AG04449 (cell line): ENCODE measurements at regions of chr6 and their contacts with region 1.

Region 1: GRCh38 chr6:170529839-170530469 is 23.2 kb downstream of the PSMB1 start:
- DNase-seq: no peak
- H3K4me3 ChIP-seq: no peak overlapping the region
- CTCF ChIP-seq: peak; percentile 87

Region 2: DNA sequence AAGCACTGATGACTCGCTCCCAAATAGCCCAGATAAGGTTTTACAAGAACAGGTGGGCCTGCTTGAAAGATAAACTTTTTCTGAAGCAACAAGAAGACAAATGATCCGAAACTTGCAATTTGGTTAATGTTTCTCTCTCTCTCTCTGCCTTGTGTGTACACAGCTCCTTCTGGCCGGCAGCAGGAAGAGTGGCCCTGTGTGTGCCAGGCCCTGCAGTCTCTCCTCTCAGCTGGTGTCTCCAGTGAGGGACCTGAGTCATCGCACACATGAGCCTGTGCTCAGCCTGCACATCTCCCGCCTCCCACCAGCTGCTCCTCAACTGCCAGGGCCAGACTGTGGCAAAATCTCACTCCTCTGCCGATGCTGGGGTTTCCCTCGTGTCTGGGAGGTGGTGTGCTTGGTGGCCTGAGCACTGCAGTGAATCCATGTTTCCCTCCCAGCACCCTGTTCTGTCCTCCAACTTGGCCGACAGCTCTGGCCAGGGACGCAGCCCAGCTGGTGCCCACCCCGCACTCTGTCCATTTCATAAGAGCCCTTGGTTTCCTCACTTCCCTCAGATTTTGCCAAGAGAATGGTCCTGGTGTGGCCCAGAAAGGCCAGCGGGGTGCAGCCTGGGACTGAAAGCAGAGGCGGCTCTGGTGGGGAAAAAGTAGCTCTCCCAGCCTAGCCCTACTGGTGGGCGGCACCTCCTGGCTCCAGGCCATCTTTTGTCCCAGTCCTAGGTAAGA is 729.1 kb before region 1 on chr6:
- CTCF ChIA-PET with region 1: interaction called, 11 read pairs
- POLR2A ChIA-PET with region 1: no interaction called
- DNase-seq: no peak
- H3K4me3 ChIP-seq: no peak overlapping the region
- CTCF ChIP-seq: no peak

Region 3: GRCh38 chr6:170516783-170517616 is 13.0 kb before region 1 on chr6:
- CTCF ChIA-PET with region 1: interaction called, 47 read pairs
- POLR2A ChIA-PET with region 1: no interaction called
- DNase-seq: peak; percentile 31
- H3K4me3 ChIP-seq: no peak overlapping the region
- CTCF ChIP-seq: peak; percentile 73

Region 4: GRCh38 chr6:170545405-170545804 is 15.5 kb after region 1 on chr6:
- CTCF ChIA-PET with region 1: interaction called, 40 read pairs
- POLR2A ChIA-PET with region 1: no interaction called
- DNase-seq: no peak
- H3K4me3 ChIP-seq: no peak overlapping the region
- CTCF ChIP-seq: no peak